ENCODE measurements at regions of chr2 and their contacts with region 1.

Region 1: GRCh38 chr2:63861220-63861822 is 19.6 kb downstream of the UGP2 start:
- DNase-seq: peak; percentile 58 to 71
- H3K4me3 ChIP-seq: no peak overlapping the region
- H3K4me3 Mint-ChIP-seq: no peak overlapping the region
- H3K27ac Mint-ChIP-seq: peak overlapping the region; percentile 85
- H3K4me1 ChIP-seq: peaks cover 32% of the 10 kb centered on the region
- H3K4me1 Mint-ChIP-seq: peaks cover 38% of the 10 kb centered on the region
- H3K27me3 ChIP-seq: no peaks in the 10 kb centered on the region
- H3K27me3 Mint-ChIP-seq: no peaks in the 10 kb centered on the region
- CTCF ChIP-seq: peak; percentile 58 to 71

Region 2: GRCh38 chr2:63614983-63615945 is 246.1 kb before region 1 on chr2:
- CTCF ChIA-PET with region 1: no interaction called
- POLR2A ChIA-PET with region 1: interaction called, 3 read pairs
- intact Hi-C with region 1: loop called (anchors 1 kb)
- DNase-seq: peak; percentile 78 to 87
- H3K4me3 ChIP-seq: peak overlapping the region; percentile 35
- H3K4me3 Mint-ChIP-seq: peak overlapping the region; percentile 67
- H3K27ac Mint-ChIP-seq: peak overlapping the region; percentile 95
- H3K4me1 ChIP-seq: peaks cover 43% of the 10 kb centered on the region
- H3K4me1 Mint-ChIP-seq: peaks cover 44% of the 10 kb centered on the region
- H3K27me3 ChIP-seq: no peaks in the 10 kb centered on the region
- H3K27me3 Mint-ChIP-seq: no peaks in the 10 kb centered on the region
- CTCF ChIP-seq: no peak

Region 3: GRCh38 chr2:63698825-63699548 is 162.3 kb before region 1 on chr2:
- CTCF ChIA-PET with region 1: interaction called, 22 read pairs
- POLR2A ChIA-PET with region 1: interaction called, 3 read pairs
- intact Hi-C with region 1: loop called (anchors 1 kb)
- DNase-seq: peak; percentile 62 to 69
- H3K4me3 ChIP-seq: no peak overlapping the region
- H3K4me3 Mint-ChIP-seq: no peak overlapping the region
- H3K27ac Mint-ChIP-seq: peak overlapping the region; percentile 34
- H3K4me1 ChIP-seq: peaks cover 8% of the 10 kb centered on the region
- H3K4me1 Mint-ChIP-seq: peaks cover 9% of the 10 kb centered on the region
- H3K27me3 ChIP-seq: no peaks in the 10 kb centered on the region
- H3K27me3 Mint-ChIP-seq: no peaks in the 10 kb centered on the region
- CTCF ChIP-seq: peak; percentile 57 to 65

Region 4: GRCh38 chr2:63841254-63842022 is 19.9 kb before region 1 on chr2 and contains the start of gene UGP2:
- CTCF ChIA-PET with region 1: interaction called, 19 read pairs
- POLR2A ChIA-PET with region 1: interaction called, 15 read pairs
- intact Hi-C with region 1: loop called (anchors 1 kb)
- DNase-seq: peak; percentile 95 to 96
- H3K4me3 ChIP-seq: peak within 1 kb of the TSS; percentile 95
- H3K4me3 Mint-ChIP-seq: peak within 1 kb of the TSS; percentile 97
- H3K27ac Mint-ChIP-seq: peak within 1 kb of the TSS; percentile 97
- H3K4me1 ChIP-seq: peaks cover 33% of the 10 kb centered on the region
- H3K4me1 Mint-ChIP-seq: peaks cover 11% of the 10 kb centered on the region
- H3K27me3 ChIP-seq: no peaks in the 10 kb centered on the region
- H3K27me3 Mint-ChIP-seq: no peaks in the 10 kb centered on the region
- CTCF ChIP-seq: peak in 1 of 2 experiments; percentile 37
- total RNA-seq, gene UGP2: 288 and 307 TPM in 2 replicates

Measured in Caco-2 (cell line).